MCF 10A (cell line): ENCODE measurements at regions of chr16 and their contacts with region 1.

Region 1: GRCh38 chr16:87062569-87063442 is 254.4 kb downstream of the C16orf95 start:
- DNase-seq: peak; percentile 77
- H3K4me3 Mint-ChIP-seq: peak overlapping the region; percentile 53
- H3K27ac Mint-ChIP-seq: no peak overlapping the region
- H3K4me1 Mint-ChIP-seq: no peaks in the 10 kb centered on the region
- H3K27me3 Mint-ChIP-seq: no peaks in the 10 kb centered on the region
- CTCF ChIP-seq: peak; percentile 84

Region 2: DNA sequence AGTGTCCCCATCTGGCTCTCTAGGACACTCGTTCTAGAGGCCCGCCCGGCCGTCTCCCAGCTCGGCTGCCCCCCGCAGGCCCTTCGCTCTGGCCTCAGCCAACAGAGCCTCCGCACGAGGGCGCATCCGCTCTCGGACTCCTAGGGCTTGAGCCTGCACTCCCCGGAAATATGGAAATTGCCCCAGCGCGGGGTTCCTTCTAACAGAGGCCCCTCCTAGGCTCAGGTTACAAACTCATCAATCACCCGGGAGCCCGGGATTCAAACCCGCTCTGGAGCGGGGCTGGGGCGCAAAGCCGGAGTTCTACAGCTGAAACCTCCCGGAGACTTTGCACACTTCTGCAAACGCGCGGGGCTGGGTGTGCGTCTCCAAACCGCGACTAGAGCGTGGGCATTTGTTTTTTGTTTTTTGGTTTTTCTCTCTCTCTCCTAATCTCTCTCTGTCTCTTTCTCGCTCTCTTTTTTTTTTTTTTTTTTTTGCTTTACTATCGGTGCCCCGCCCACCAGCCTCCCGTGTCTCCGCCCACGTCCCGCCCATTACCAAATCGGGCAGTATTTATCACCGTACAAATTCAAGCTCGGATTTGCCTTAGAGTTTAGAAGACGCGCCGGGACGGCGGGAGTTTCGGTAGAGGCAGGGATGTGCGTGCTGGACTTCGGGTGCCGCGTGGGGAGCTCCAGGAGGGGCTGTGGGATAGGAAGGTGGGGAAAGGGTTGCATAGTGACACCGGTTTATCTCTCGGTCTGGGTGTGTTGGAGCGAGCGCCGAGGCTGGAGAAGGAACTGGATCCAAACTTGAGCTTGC is 486.9 kb before region 1 on chr16:
- CTCF ChIA-PET with region 1: interaction called, 15 read pairs
- POLR2A ChIA-PET with region 1: interaction called, 19 read pairs
- intact Hi-C with region 1: no loop called
- DNase-seq: peak; percentile 98
- H3K4me3 Mint-ChIP-seq: peak overlapping the region; percentile 87
- H3K27ac Mint-ChIP-seq: peak overlapping the region; percentile 73
- H3K4me1 Mint-ChIP-seq: peaks cover 28% of the 10 kb centered on the region
- H3K27me3 Mint-ChIP-seq: no peaks in the 10 kb centered on the region
- CTCF ChIP-seq: peak; percentile 64

Region 3: DNA sequence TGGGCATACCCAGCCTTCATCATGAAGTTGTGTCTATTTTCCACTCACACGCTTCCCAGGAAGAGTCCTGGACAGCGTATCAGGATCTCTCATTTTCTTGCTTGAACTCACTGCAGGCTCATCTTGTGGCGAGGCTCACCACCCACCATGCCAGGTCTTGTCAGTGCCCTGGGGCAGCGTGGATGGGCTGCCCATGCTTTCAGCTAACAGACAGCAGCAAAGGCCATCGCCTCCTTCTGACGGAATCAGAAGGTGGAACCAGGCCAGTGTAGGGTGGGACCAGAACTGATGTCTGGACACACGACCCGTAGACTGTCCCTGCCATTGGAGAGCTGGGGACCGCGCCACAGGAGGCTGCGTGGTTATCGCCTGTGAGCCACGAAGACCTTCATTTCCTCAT is 315.0 kb before region 1 on chr16:
- CTCF ChIA-PET with region 1: no interaction called
- POLR2A ChIA-PET with region 1: no interaction called
- intact Hi-C with region 1: no loop called
- DNase-seq: no peak
- H3K4me3 Mint-ChIP-seq: no peak overlapping the region
- H3K27ac Mint-ChIP-seq: no peak overlapping the region
- H3K4me1 Mint-ChIP-seq: peaks cover 42% of the 10 kb centered on the region
- H3K27me3 Mint-ChIP-seq: no peaks in the 10 kb centered on the region
- CTCF ChIP-seq: no peak

Region 4: GRCh38 chr16:87017365-87018012 is 45.3 kb before region 1 on chr16:
- CTCF ChIA-PET with region 1: interaction called, 9 read pairs
- POLR2A ChIA-PET with region 1: no interaction called
- intact Hi-C with region 1: loop called (anchors 5 kb)
- DNase-seq: peak; percentile 93
- H3K4me3 Mint-ChIP-seq: no peak overlapping the region
- H3K27ac Mint-ChIP-seq: no peak overlapping the region
- H3K4me1 Mint-ChIP-seq: peaks cover 7% of the 10 kb centered on the region
- H3K27me3 Mint-ChIP-seq: peaks cover 18% of the 10 kb centered on the region
- CTCF ChIP-seq: peak; percentile 41

Region 5: DNA sequence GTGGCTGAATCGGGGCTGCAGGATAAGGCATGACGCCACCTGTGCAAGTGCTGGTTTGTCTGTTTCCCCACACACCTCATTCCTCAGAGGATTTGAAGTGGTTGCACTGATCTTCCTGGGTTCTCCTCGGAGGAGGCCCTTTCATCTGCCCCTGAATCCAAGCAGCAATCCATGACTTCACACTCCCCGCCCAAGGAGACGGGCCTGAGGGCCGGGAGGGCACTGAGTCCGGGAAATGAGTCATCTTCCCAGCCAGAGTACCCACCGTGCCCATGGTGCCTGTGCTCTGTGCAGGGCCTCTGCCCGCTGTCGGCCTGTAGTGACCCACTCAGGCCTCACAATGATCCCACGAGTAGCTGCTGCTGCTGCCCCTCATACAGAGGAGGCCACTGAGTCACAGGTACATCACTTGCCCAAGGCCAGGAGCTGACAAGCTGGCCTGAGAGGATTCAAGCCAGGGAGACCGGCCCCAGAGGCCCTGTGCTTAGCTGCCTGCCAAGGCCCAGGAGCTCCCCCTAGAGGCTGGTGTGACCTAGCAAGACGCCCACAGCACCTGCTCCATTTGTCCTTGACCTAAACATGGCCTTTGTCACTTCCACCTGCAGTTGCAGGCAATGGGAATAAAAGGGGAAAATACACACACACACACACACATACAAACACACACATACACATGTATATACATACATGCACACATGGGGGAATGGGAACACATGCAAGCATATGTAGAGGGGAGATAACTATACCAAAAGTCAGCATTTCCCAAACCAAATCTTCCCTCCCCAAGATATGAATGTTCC is 14.3 kb after region 1 on chr16:
- CTCF ChIA-PET with region 1: interaction called, 44 read pairs
- POLR2A ChIA-PET with region 1: no interaction called
- intact Hi-C with region 1: no loop called
- DNase-seq: peak; percentile 81
- H3K4me3 Mint-ChIP-seq: no peak overlapping the region
- H3K27ac Mint-ChIP-seq: peak overlapping the region; percentile 32
- H3K4me1 Mint-ChIP-seq: peaks cover 10% of the 10 kb centered on the region
- H3K27me3 Mint-ChIP-seq: no peaks in the 10 kb centered on the region
- CTCF ChIP-seq: peak; percentile 60

Region 6: DNA sequence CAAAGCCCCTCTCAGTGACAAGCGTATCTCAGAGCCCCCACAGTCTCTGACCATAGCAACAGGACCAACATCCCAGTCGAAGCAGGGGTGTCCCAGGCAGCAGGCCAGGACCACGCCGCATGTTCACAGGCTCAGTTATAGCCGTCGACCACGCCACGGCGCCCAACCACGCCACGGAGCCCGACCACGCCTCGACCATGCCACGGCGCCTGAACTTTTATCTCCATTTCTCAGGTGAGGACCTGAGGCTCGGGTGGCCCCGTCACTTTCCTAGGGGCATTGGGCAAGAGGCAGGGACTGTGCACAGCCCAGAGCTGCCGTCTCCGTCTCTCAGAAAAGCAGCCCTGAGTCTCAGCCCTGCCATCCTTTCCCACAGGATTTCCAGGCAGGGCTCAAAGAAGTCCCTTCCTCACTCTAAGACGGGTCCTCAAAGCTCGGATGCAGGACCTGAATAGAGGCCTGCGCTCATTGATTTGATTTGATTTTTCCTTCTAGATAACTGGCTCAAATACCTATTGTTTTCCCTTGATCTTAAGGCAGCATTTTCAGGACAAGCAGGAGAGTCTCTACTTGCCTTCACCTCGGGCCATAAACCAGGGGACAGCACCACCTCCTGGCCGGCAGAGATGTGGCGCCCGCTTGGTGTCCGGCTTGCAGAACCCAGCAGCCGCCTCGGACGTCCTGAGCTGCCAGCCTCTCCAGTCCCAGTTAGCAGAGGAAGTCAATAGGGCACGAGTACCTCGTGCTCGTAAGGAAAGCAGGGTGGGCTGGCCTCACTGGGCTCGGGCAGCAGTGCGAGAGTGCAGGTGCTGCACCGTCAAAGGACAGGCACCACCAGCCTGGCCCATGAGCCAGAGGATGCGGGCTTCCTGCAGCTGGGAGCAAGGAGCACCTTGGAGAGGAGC is 215.6 kb after region 1 on chr16:
- CTCF ChIA-PET with region 1: interaction called, 58 read pairs
- POLR2A ChIA-PET with region 1: interaction called, 8 read pairs
- intact Hi-C with region 1: loop called (anchors 1 kb)
- DNase-seq: peak; percentile 77
- H3K4me3 Mint-ChIP-seq: no peak overlapping the region
- H3K27ac Mint-ChIP-seq: no peak overlapping the region
- H3K4me1 Mint-ChIP-seq: peaks cover 13% of the 10 kb centered on the region
- H3K27me3 Mint-ChIP-seq: peaks cover 40% of the 10 kb centered on the region
- CTCF ChIP-seq: peak; percentile 86